Mucosa of descending colon (tissue), 3 donors: ENCODE measurements at regions of chr2 and their contacts with region 1.

Region 1: DNA sequence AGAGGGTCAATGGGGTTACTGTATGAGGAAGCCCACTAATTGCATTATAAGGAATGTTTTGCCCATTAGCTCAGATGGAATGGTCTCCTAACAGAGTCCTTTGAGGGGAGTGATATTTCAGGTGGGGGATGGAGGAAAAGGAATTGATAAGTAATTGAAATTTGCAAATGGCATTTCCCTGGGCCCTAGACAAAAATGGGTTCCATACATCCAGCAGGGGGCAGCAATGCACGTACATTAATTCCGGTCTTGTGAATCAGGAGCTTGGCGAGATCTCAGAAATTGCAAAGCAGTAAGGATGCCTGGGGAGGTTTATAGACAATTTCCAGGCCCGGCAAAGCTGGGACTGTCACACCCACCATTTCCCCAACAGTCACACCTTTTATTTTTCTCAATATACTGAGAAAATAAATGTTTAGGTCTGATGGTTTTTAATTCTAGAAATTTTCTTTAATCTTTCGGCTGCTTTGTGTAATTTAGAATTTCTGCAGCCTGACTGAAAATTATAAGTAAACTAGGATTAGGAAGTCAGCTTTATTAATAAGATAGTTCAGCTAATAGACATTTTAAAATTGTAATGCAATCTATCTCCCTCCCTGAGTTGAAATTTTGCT is 122.8 kb downstream of the LYPD1 start:
- DNase-seq: peak in 2 of 3 donors; percentile 58 to 89
- ATAC-seq: peak; percentile 78
- H3K4me3 ChIP-seq: no peak overlapping the region
- H3K4me1 ChIP-seq: no peaks in the 10 kb centered on the region
- CTCF ChIP-seq: peak; percentile 46

Region 2: DNA sequence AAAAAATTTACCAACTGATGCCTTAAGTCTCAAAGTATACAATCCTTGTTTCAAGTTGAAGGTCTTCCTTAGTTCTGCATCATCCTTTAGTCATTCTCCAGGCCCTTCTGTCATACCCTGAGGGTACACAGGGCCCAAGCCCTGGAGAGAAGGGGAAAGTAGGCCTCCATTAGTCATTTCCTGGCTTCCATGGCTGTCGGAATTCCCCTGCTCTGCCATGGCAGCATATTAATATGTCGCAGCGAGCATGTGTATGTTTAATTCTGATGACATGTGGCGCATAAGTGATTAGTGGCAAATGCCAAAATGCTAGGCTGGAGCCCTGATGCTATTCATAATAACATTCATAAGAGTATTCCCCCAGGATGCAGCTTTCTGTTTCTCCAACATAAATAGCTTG is 108.5 kb before region 1 on chr2:
- intact Hi-C with region 1: no loop called
- DNase-seq: no peak
- ATAC-seq: no peak
- H3K4me3 ChIP-seq: no peak overlapping the region
- H3K4me1 ChIP-seq: no peaks in the 10 kb centered on the region
- CTCF ChIP-seq: no peak

Region 3: DNA sequence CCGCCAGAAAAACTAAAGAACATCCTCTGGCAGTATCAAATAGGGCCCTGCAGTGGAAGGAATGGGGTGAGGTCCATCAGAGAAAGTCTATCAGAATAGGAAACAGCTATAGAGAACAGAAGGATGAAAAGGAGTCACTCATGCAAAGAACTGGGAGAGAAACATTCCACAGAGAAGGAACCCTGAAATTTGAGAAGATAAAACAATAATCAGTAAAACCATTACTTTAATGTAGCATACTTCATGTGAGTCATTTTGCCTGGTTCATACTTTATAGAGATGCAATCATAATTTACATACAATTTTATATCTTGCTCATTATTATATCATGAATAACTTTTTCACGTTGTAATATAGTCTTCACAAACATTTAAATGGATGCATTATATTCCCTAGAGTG is 618.9 kb after region 1 on chr2:
- intact Hi-C with region 1: loop called (anchors 10 kb)
- DNase-seq: no peak
- ATAC-seq: no peak
- H3K4me3 ChIP-seq: no peak overlapping the region
- H3K4me1 ChIP-seq: no peaks in the 10 kb centered on the region
- CTCF ChIP-seq: no peak

Region 4: GRCh38 chr2:133171393-133172004 is 624.3 kb after region 1 on chr2:
- intact Hi-C with region 1: loop called (anchors 10 kb)
- DNase-seq: peak in 1 of 3 donors; percentile 56
- ATAC-seq: peak; percentile 55
- H3K4me3 ChIP-seq: no peak overlapping the region
- H3K4me1 ChIP-seq: no peaks in the 10 kb centered on the region
- CTCF ChIP-seq: no peak